Posterior vena cava (tissue), 2 donors: ENCODE measurements at regions of chr3 and their contacts with region 1.

Region 1: GRCh38 chr3:193305356-193305755 is 64.3 kb downstream of the PLAAT1 start:
- DNase-seq: no peak

Region 2: GRCh38 chr3:193148494-193149473 is 156.6 kb before region 1 on chr3:
- intact Hi-C with region 1: no loop called
- DNase-seq: no peak

Region 3: DNA sequence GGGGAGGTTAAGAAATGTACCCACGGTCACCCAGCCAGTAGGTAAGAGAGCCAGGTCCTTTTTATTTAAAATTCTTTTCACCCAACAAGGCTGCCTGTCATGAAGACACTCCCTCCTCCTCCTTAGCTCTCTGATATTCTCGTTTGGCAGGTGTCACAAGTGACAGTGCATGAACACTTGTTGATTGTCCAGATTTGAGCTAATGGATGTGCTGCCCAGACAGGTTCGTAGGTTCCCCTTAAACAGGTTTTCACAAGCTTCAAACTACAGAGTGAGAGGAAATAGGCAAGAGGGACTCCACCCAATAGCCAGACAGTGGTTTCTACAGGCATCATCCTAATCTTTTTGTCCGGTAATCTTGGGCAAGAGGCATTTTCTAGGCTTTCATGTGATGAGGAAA is 217.1 kb after region 1 on chr3:
- intact Hi-C with region 1: loop called in 1 of 2 experiments (anchors 5 kb)
- DNase-seq: no peak